Right lobe of liver (tissue), 6 donors: ENCODE measurements at regions of chr6 and their contacts with region 1.

Region 1: GRCh38 chr6:137637121-137637520 is 142.9 kb upstream of the OLIG3 start:
- DNase-seq: no peak
- ATAC-seq: no peak
- H3K4me3 ChIP-seq: no peak overlapping the region
- H3K27ac ChIP-seq: no peak overlapping the region
- H3K4me1 ChIP-seq: no peaks in the 10 kb centered on the region
- H3K27me3 ChIP-seq: no peaks in the 10 kb centered on the region
- CTCF ChIP-seq: no peak
- POLR2A ChIP-seq: no peak

Region 2: GRCh38 chr6:137261393-137262160 is 375.5 kb before region 1 on chr6:
- intact Hi-C with region 1: loop called in 1 of 2 experiments (anchors 10 kb)
- DNase-seq: no peak
- ATAC-seq: peak in 3 of 4 donors; percentile 34 to 59 (median 39)
- H3K4me3 ChIP-seq: no peak overlapping the region
- H3K27ac ChIP-seq: no peak overlapping the region
- H3K4me1 ChIP-seq: peaks cover 0 to 17% (median 0%) of the 10 kb centered on the region in 4 donors
- H3K27me3 ChIP-seq: no peaks in the 10 kb centered on the region
- CTCF ChIP-seq: no peak
- POLR2A ChIP-seq: no peak